ENCODE measurements at regions of chr2 and their contacts with region 1.

Region 1: DNA sequence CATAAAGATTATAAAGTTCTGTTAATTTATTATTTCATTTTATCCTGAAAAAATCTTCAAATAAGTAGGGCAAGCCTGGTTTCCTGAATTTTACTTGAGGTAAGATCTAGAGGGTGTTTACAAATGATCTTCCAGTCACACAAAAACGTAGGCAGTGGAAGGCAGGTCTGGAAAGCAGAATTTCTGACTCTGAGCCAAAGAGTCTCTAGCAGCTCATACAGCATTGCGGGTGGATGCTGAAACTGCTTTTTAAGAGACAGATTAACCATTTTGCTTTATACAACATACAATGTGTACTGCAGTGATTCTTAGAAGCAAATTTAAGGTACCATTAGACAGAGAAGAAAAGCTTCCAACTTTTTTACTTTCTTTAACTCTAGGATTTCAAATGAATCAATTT is 117.0 kb downstream of the FTCDNL1 start:
- DNase-seq: no peak
- H3K4me3 ChIP-seq: no peak overlapping the region
- H3K27ac ChIP-seq: no peak overlapping the region
- H3K4me1 ChIP-seq: no peaks in the 10 kb centered on the region
- H3K27me3 ChIP-seq: no peaks in the 10 kb centered on the region
- CTCF ChIP-seq: no peak
- EP300 ChIP-seq: no peak
- POLR2A ChIP-seq: no peak

Region 2: GRCh38 chr2:198309673-198310280 is 1424.2 kb before region 1 on chr2:
- intact Hi-C with region 1: loop called in 1 of 4 experiments (anchors 5 kb)
- DNase-seq: peak in 3 of 5 donors; percentile 22 to 31 (median 26)
- H3K4me3 ChIP-seq: no peak overlapping the region
- H3K27ac ChIP-seq: no peak overlapping the region
- H3K4me1 ChIP-seq: no peaks in the 10 kb centered on the region
- H3K27me3 ChIP-seq: no peaks in the 10 kb centered on the region
- CTCF ChIP-seq: peak in 2 of 3 donors; percentile 26 to 38
- EP300 ChIP-seq: no peak
- POLR2A ChIP-seq: no peak

Measured in ovary (tissue), 10 donors.